Head of caudate nucleus (tissue), 42 donors: ENCODE measurements at regions of chr11 and their contacts with region 1.

Region 1: GRCh38 chr11:64916775-64917662 is at the start of gene ATG2A:
- DNase-seq: peak; percentile 95 to 100 (median 99)

Region 2: GRCh38 chr11:65027213-65028067 is 110.4 kb after region 1 on chr11 and contains the start of gene SNX15:
- intact Hi-C with region 1: loop called (anchors 2 kb)
- DNase-seq: peak; percentile 88 to 97 (median 95)

Region 3: DNA sequence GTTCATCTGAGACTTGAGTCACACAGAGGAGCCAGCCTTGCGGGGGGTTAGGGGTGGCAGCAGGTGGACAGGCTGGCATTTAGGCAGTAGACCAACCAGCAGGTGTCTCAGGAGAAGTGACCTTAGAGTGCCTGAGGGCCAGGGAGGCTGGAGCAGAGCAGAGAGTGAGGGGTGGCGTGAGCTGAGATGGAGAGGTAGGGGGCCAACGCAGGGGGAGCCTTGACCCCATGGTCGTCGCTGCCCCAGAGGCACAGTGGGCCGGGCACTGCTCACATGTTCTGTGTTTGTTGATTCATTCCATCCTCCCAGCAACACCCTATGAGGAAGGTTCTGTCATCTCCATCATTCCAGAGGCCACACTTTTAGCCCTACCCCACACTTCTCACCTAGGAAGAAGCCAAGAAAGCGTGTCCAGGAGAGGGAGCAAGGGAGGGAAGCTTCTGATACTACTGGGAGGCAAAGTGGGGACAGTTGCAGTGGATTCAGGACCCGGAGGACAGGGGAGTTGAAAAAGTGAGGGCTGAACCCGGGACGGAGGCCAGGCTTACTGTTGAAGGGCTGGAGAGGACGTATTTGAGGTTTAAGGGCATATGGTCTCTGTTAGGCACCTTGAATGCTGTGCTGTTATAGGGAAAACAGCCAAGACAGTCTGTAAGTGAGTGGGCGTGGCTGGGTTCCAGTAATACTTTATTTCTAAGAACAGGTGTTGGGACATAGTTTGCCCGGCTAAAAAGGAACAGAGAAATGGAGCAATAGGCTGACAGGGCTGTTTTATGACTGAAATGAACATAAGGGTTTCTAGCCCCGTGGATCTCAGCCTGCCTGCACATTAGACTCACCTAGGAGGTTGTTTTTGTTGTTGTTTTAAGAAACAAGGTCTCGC is 1051.8 kb after region 1 on chr11:
- intact Hi-C with region 1: no loop called
- DNase-seq: no peak